Panc1 (cell line): ENCODE measurements at regions of chr11 and their contacts with region 1.

Region 1: GRCh38 chr11:84384731-84385130 is 1098.6 kb upstream of the CCDC90B start:
- DNase-seq: peak; percentile 38
- ATAC-seq: no peak
- H3K4me3 ChIP-seq: no peak overlapping the region
- H3K27ac ChIP-seq: no peak overlapping the region
- H3K4me1 ChIP-seq: no peaks in the 10 kb centered on the region
- H3K27me3 ChIP-seq: no peaks in the 10 kb centered on the region
- CTCF ChIP-seq: peak; percentile 80

Region 2: GRCh38 chr11:83836883-83837654 is 547.7 kb before region 1 on chr11:
- CTCF ChIA-PET with region 1: no interaction called
- POLR2A ChIA-PET with region 1: no interaction called
- in situ Hi-C with region 1: no loop called
- intact Hi-C with region 1: loop called (anchors 5 kb)
- DNase-seq: peak; percentile 38
- ATAC-seq: peak; percentile 96
- H3K4me3 ChIP-seq: no peak overlapping the region
- H3K27ac ChIP-seq: no peak overlapping the region
- H3K4me1 ChIP-seq: no peaks in the 10 kb centered on the region
- H3K27me3 ChIP-seq: peaks cover 5% of the 10 kb centered on the region; the same call in 1 of the 2 replicates
- CTCF ChIP-seq: peak; percentile 90